Activated CD4-positive, alpha-beta memory T cell treated with anti-CD3 and anti-CD28 coated beads, Interleukin-2, amount 10 ng/mL, durations not matched to agents 7 days and 5 days (primary cell): ENCODE measurements at regions of chr17 and their contacts with region 1.

Region 1: GRCh38 chr17:39235555-39236449 is 10.1 kb upstream of the STAC2 start:
- DNase-seq: peak; percentile 72
- H3K4me3 Mint-ChIP-seq: no peak overlapping the region
- H3K27ac Mint-ChIP-seq: no peak overlapping the region
- H3K4me1 Mint-ChIP-seq: peaks cover 28% of the 10 kb centered on the region
- H3K27me3 Mint-ChIP-seq: peaks cover 9% of the 10 kb centered on the region

Region 2: GRCh38 chr17:39199820-39200069 is 36.1 kb before region 1 on chr17:
- CTCF ChIA-PET with region 1: interaction called, 208 read pairs
- POLR2A ChIA-PET with region 1: interaction called, 22 read pairs
- DNase-seq: peak; percentile 89
- H3K4me3 Mint-ChIP-seq: peak overlapping the region; percentile 93
- H3K27ac Mint-ChIP-seq: peak overlapping the region; percentile 96
- H3K4me1 Mint-ChIP-seq: peaks cover 66% of the 10 kb centered on the region
- H3K27me3 Mint-ChIP-seq: no peaks in the 10 kb centered on the region

Region 3: DNA sequence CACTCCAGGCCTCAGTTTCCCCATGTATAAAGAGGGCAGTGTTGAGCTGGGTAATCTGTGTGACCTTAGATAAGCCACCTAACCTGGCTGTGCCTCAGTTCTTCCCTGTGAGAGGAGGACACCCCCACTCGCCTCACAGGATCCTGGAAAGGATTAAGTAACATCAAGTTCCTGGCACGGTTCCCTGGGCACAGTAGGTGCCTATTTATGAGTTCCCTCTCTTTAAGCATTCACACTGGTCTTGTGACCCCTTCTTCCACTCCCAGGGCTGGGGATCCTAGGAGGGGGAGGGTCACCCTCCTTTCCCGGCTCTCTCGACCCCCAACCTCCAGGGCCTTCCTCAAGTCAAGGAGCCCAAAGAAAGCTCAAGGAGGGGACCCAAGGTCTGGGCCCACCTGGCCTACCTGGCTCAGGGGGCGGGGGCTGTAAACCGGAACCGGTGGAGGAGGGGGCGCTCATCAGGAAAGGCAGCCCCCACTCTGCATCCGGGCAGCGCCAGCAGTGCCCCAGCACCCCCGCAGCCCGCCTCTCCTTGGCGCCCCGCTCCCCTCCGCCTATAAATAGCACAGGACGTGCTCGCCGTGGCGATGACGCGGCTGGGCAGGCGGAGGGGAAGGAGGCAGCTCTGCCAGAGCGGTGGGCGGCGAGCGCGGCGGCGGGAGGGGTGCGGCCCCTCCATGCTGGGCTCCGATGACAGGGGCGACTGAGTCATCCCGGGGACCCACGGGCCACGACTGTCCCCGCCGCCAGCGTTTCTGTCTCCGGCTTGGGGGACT is 26.3 kb before region 1 on chr17:
- CTCF ChIA-PET with region 1: interaction called, 208 read pairs
- POLR2A ChIA-PET with region 1: interaction called, 22 read pairs
- DNase-seq: peak; percentile 65
- H3K4me3 Mint-ChIP-seq: peak overlapping the region; percentile 4
- H3K27ac Mint-ChIP-seq: no peak overlapping the region
- H3K4me1 Mint-ChIP-seq: peaks cover 18% of the 10 kb centered on the region
- H3K27me3 Mint-ChIP-seq: peaks cover 17% of the 10 kb centered on the region

Region 4: GRCh38 chr17:39517224-39517623 is 281.4 kb after region 1 on chr17:
- CTCF ChIA-PET with region 1: no interaction called
- POLR2A ChIA-PET with region 1: no interaction called
- DNase-seq: no peak
- H3K4me3 Mint-ChIP-seq: no peak overlapping the region
- H3K27ac Mint-ChIP-seq: no peak overlapping the region
- H3K4me1 Mint-ChIP-seq: peaks cover 2% of the 10 kb centered on the region
- H3K27me3 Mint-ChIP-seq: no peaks in the 10 kb centered on the region